ENCODE measurements at regions of chr4 and their contacts with region 1.

Region 1: GRCh38 chr4:99054428-99054994 is 34.1 kb downstream of the ADH5 start:
- DNase-seq: no peak
- H3K4me3 ChIP-seq: no peak overlapping the region
- H3K27ac ChIP-seq: no peak overlapping the region
- H3K4me1 ChIP-seq: peaks cover 13% of the 10 kb centered on the region
- H3K27me3 ChIP-seq: no peaks in the 10 kb centered on the region
- CTCF ChIP-seq: no peak

Region 2: DNA sequence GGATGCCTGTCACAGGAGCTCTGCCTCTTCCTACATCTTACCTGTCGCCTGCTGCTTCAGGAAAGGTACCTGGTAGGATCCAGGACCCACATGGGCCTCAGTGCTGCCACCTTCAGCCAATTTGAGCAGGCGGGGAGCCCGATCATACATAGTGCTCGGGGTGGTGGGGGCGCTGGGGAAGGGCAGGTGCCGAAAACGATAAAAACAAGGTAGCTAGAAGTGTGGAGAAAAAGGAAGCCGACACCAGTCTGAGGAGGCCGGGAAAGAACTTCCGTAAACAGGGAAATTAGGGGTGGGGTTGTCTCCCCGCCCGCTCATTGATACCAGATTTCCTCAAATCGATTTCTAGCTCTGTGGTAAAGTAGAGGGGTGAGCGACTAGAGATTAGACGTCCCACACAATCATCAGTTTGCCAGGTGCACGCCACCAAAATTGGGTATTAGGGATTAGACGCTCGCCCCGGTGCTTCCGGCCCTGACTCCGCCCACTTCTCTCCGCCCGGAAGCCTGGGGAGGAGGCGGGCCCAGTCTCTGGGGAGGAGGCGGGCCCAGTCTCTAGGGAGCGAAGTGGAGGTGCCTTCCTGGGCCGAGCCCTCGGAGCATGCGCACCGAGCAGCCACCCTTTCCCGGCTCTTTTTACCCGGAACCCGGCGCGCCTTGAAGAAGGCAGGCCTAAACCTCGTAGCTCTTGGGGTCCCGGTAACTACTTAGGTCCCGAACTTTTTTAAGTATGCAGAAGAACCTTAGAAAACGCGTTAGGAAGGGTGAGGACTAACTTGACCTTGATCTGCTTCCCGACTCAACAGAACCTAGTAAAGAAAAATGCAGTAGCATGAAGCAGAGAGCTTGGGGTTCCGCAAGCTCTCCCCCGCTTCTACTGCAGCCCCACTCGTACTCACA is 911.3 kb before region 1 on chr4 and contains the start of gene STPG2:
- CTCF ChIA-PET with region 1: no interaction called
- dilution Hi-C with region 1: no loop called
- in situ Hi-C with region 1: no loop called
- intact Hi-C with region 1: loop called (anchors 10 kb)
- DNase-seq: peak; percentile 93
- H3K4me3 ChIP-seq: peak within 1 kb of the TSS; percentile 64 to 76 (median 69)
- H3K27ac ChIP-seq: peak within 1 kb of the TSS; percentile 78
- H3K4me1 ChIP-seq: peaks cover 12% of the 10 kb centered on the region
- H3K27me3 ChIP-seq: no peaks in the 10 kb centered on the region
- CTCF ChIP-seq: peak; percentile 53 to 73
- total RNA-seq, gene STPG2: 0.17 to 0.28 TPM

Region 3: GRCh38 chr4:98546910-98547594 is 507.5 kb before region 1 on chr4:
- CTCF ChIA-PET with region 1: no interaction called
- dilution Hi-C with region 1: no loop called
- in situ Hi-C with region 1: no loop called
- intact Hi-C with region 1: no loop called
- DNase-seq: peak; percentile 30
- H3K4me3 ChIP-seq: peak overlapping the region; percentile 38 to 45 (median 42)
- H3K27ac ChIP-seq: peak overlapping the region; percentile 38
- H3K4me1 ChIP-seq: peaks cover 11% of the 10 kb centered on the region
- H3K27me3 ChIP-seq: no peaks in the 10 kb centered on the region
- CTCF ChIP-seq: peak in 1 of 2 donors; percentile 16

Region 4: DNA sequence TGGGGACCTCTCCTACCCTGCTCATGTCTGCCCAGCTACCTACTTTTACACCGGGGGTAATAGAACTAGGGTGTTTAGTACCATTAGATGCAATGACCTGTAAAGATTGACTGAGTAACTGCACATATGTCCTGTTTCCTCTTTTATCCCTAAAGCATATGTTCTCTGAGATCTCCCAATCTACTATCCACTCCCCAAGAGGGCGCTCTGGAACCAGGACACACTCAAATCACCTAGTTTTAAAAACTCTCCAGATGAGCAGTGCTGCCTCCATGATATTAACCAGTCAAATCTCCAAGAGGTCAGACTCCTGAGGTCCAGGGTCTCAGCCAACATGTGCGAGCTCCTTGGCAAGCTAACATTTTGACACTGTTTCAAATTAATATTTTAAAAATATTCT is 309.1 kb before region 1 on chr4:
- CTCF ChIA-PET with region 1: no interaction called
- dilution Hi-C with region 1: no loop called
- in situ Hi-C with region 1: no loop called
- intact Hi-C with region 1: loop called (anchors 5 kb)
- DNase-seq: peak; percentile 32
- H3K4me3 ChIP-seq: no peak overlapping the region
- H3K27ac ChIP-seq: no peak overlapping the region
- H3K4me1 ChIP-seq: no peaks in the 10 kb centered on the region
- H3K27me3 ChIP-seq: no peaks in the 10 kb centered on the region
- CTCF ChIP-seq: peak; percentile 19 to 63

Region 5: GRCh38 chr4:98939892-98940298 is 114.6 kb before region 1 on chr4:
- CTCF ChIA-PET with region 1: no interaction called
- dilution Hi-C with region 1: no loop called
- in situ Hi-C with region 1: no loop called
- intact Hi-C with region 1: loop called (anchors 1 kb)
- DNase-seq: peak; percentile 49
- H3K4me3 ChIP-seq: no peak overlapping the region
- H3K27ac ChIP-seq: no peak overlapping the region
- H3K4me1 ChIP-seq: peaks cover 9% of the 10 kb centered on the region
- H3K27me3 ChIP-seq: no peaks in the 10 kb centered on the region
- CTCF ChIP-seq: peak; percentile 81 to 84

Region 6: DNA sequence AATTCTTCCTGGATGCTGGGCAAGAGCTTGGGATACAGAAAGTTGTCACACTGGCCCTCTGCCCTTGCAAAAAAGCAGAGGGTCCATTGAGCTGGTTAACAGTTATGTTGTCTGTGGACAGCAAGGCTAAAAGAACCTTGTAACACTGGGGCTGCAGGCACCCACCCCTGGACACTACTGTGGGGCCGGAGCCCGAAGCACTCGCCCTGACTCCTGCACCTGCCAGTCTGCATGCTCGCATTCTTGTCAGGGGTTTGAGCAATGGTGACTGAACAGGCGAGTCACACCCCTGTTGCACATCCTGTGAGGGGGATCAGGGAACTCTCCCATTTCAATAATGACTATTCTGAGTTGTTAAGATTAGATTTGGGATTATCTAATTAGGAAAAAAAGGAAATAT is 66.0 kb after region 1 on chr4:
- CTCF ChIA-PET with region 1: no interaction called
- dilution Hi-C with region 1: no loop called
- in situ Hi-C with region 1: no loop called
- intact Hi-C with region 1: no loop called
- DNase-seq: no peak
- H3K4me3 ChIP-seq: no peak overlapping the region
- H3K27ac ChIP-seq: no peak overlapping the region
- H3K4me1 ChIP-seq: no peaks in the 10 kb centered on the region
- H3K27me3 ChIP-seq: no peaks in the 10 kb centered on the region
- CTCF ChIP-seq: no peak